B cell (primary cell): ENCODE measurements at regions of chr3 and their contacts with region 1.

Region 1: GRCh38 chr3:27712136-27713077 is 9.7 kb downstream of the EOMES start:
- DNase-seq: peak; percentile 82
- ATAC-seq: peak; percentile 97
- H3K4me3 ChIP-seq: peak overlapping the region; percentile 50 to 79 (median 66)
- H3K4me3 Mint-ChIP-seq: peak overlapping the region; percentile 94
- H3K27ac ChIP-seq: no peak overlapping the region
- H3K27ac Mint-ChIP-seq: peak overlapping the region; percentile 64
- H3K4me1 ChIP-seq: peaks cover 31 to 32% of the 10 kb centered on the region in 2 donors
- H3K4me1 Mint-ChIP-seq: peaks cover 33% of the 10 kb centered on the region
- H3K27me3 ChIP-seq: peaks cover 0 to 57% (median 51%) of the 10 kb centered on the region in 4 experiments
- H3K27me3 Mint-ChIP-seq: peaks cover 64% of the 10 kb centered on the region
- CTCF ChIP-seq: peak; percentile 82

Region 2: GRCh38 chr3:26484140-26484539 is 1228.3 kb before region 1 on chr3:
- CTCF ChIA-PET with region 1: no interaction called
- POLR2A ChIA-PET with region 1: no interaction called
- intact Hi-C with region 1: no loop called
- DNase-seq: no peak
- ATAC-seq: no peak
- H3K4me3 ChIP-seq: no peak overlapping the region
- H3K4me3 Mint-ChIP-seq: no peak overlapping the region
- H3K27ac ChIP-seq: no peak overlapping the region
- H3K27ac Mint-ChIP-seq: no peak overlapping the region
- H3K4me1 ChIP-seq: no peaks in the 10 kb centered on the region
- H3K4me1 Mint-ChIP-seq: no peaks in the 10 kb centered on the region
- H3K27me3 ChIP-seq: no peaks in the 10 kb centered on the region
- H3K27me3 Mint-ChIP-seq: no peaks in the 10 kb centered on the region
- CTCF ChIP-seq: no peak

Region 3: GRCh38 chr3:27696906-27697305 is 15.5 kb before region 1 on chr3:
- CTCF ChIA-PET with region 1: interaction called, 18 read pairs
- POLR2A ChIA-PET with region 1: no interaction called
- intact Hi-C with region 1: no loop called
- DNase-seq: no peak
- ATAC-seq: no peak
- H3K4me3 ChIP-seq: no peak overlapping the region
- H3K4me3 Mint-ChIP-seq: no peak overlapping the region
- H3K27ac ChIP-seq: no peak overlapping the region
- H3K27ac Mint-ChIP-seq: no peak overlapping the region
- H3K4me1 ChIP-seq: no peaks in the 10 kb centered on the region
- H3K4me1 Mint-ChIP-seq: peaks cover 10% of the 10 kb centered on the region
- H3K27me3 ChIP-seq: no peaks in the 10 kb centered on the region
- H3K27me3 Mint-ChIP-seq: peaks cover 5% of the 10 kb centered on the region
- CTCF ChIP-seq: no peak

Region 4: GRCh38 chr3:27728195-27729087 is 16.0 kb after region 1 on chr3:
- CTCF ChIA-PET with region 1: interaction called, 20 read pairs
- POLR2A ChIA-PET with region 1: no interaction called
- intact Hi-C with region 1: loop called (anchors 2 kb)
- DNase-seq: peak; percentile 49
- ATAC-seq: no peak
- H3K4me3 ChIP-seq: peak overlapping the region in 2 of 5 experiments; percentile 7 to 17
- H3K4me3 Mint-ChIP-seq: peak overlapping the region; percentile 63
- H3K27ac ChIP-seq: no peak overlapping the region
- H3K27ac Mint-ChIP-seq: no peak overlapping the region
- H3K4me1 ChIP-seq: peaks cover 17 to 43% of the 10 kb centered on the region in 2 donors
- H3K4me1 Mint-ChIP-seq: peaks cover 24% of the 10 kb centered on the region
- H3K27me3 ChIP-seq: peaks cover 0 to 73% (median 67%) of the 10 kb centered on the region in 4 experiments
- H3K27me3 Mint-ChIP-seq: peaks cover 81% of the 10 kb centered on the region
- CTCF ChIP-seq: no peak

Region 5: DNA sequence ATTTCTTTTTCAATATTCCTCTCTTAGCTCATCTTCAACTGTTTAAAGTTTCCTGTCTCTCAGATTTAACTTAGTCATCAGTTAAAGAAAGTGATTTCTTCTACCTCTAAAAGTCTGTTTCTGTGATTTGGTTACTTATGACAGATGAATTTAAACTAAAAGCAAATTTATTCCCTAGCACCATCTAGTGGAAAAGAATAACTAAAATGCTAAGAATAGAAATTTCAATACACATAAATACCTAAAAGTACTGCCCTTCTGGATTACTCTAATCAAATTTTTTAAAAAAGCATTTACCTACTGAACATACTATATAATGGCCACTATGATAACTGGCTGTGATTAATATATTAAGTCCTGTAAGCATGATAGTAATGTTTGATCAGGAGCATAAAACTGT is 622.1 kb after region 1 on chr3:
- CTCF ChIA-PET with region 1: interaction called, 112 read pairs
- POLR2A ChIA-PET with region 1: no interaction called
- intact Hi-C with region 1: no loop called
- DNase-seq: no peak
- ATAC-seq: no peak
- H3K4me3 ChIP-seq: no peak overlapping the region
- H3K4me3 Mint-ChIP-seq: no peak overlapping the region
- H3K27ac ChIP-seq: no peak overlapping the region
- H3K27ac Mint-ChIP-seq: no peak overlapping the region
- H3K4me1 ChIP-seq: no peaks in the 10 kb centered on the region
- H3K4me1 Mint-ChIP-seq: no peaks in the 10 kb centered on the region
- H3K27me3 ChIP-seq: no peaks in the 10 kb centered on the region
- H3K27me3 Mint-ChIP-seq: no peaks in the 10 kb centered on the region
- CTCF ChIP-seq: no peak